HepG2 (cell line): ENCODE measurements at regions of chr19 and their contacts with region 1.

Region 1: GRCh38 chr19:11125994-11126685 is 29.4 kb downstream of the SPC24 start:
- DNase-seq: peak; percentile 67
- ATAC-seq: peak; percentile 50
- H3K4me3 ChIP-seq: no peak overlapping the region
- H3K27ac ChIP-seq: peak overlapping the region; percentile 36
- H3K4me1 ChIP-seq: peaks cover 51% of the 10 kb centered on the region
- H3K27me3 ChIP-seq: no peaks in the 10 kb centered on the region
- CTCF ChIP-seq: peak; percentile 80
- EP300 ChIP-seq: no peak
- POLR2A ChIP-seq: no peak
- RAD21 ChIP-seq: 0 out of 2 replicates have a peak, but pooled peaks have one; percentile 35

Region 2: GRCh38 chr19:11035441-11036377 is 90.4 kb before region 1 on chr19:
- CTCF ChIA-PET with region 1: interaction called, 5 read pairs
- POLR2A ChIA-PET with region 1: interaction called, 4 read pairs
- in situ Hi-C with region 1: no loop called
- intact Hi-C with region 1: loop called (anchors 1 kb)
- DNase-seq: peak; percentile 81
- ATAC-seq: peak; percentile 96
- H3K4me3 ChIP-seq: no peak overlapping the region
- H3K27ac ChIP-seq: no peak overlapping the region
- H3K4me1 ChIP-seq: no peaks in the 10 kb centered on the region
- H3K27me3 ChIP-seq: no peaks in the 10 kb centered on the region
- CTCF ChIP-seq: peak; percentile 96
- EP300 ChIP-seq: no peak
- POLR2A ChIP-seq: no peak
- RAD21 ChIP-seq: peak; percentile 91

Region 3: GRCh38 chr19:11234486-11235075 is 108.4 kb after region 1 on chr19:
- CTCF ChIA-PET with region 1: no interaction called
- POLR2A ChIA-PET with region 1: interaction called, 10 read pairs
- in situ Hi-C with region 1: no loop called
- intact Hi-C with region 1: no loop called
- DNase-seq: peak; percentile 75
- ATAC-seq: no peak
- H3K4me3 ChIP-seq: no peak overlapping the region
- H3K27ac ChIP-seq: no peak overlapping the region
- H3K4me1 ChIP-seq: peaks cover 77% of the 10 kb centered on the region
- H3K27me3 ChIP-seq: no peaks in the 10 kb centered on the region
- CTCF ChIP-seq: no peak
- EP300 ChIP-seq: no peak
- POLR2A ChIP-seq: no peak
- RAD21 ChIP-seq: no peak